ENCODE measurements at regions of chr15 and their contacts with region 1.

Region 1: DNA sequence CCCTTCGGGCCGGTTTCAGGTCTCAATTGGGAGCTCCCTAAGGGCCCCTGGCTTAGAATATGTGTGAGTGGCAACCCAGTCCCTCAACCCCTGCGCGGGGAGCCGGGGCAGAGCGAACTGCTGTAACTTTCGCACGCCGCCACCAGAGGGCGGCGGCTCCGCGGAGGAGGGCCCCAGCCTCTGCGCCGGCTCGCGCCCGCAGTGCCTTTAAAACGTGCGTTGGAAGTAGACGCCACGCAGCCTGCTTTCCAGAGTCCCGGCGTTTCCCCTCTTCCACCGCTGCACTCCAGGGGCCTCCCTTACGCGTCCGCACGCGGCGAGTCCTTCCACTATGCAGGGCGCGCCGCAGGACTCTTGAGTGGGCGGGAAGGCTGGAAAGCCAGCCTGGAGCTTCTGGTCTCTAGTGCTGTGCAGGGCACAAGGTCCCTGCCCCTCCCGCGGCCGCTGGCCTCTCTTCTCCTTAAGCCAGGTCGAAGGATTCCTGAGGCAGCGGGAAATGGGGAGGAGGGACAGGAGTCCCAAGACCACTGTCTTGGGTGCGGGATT is 23.7 kb upstream of the RNU6-1 start:
- DNase-seq: peak; percentile 87
- CTCF ChIP-seq: peak; percentile 83

Region 2: GRCh38 chr15:67850995-67851571 is 12.4 kb before region 1 on chr15:
- CTCF ChIA-PET with region 1: interaction called, 33 read pairs
- POLR2A ChIA-PET with region 1: no interaction called
- DNase-seq: no peak
- CTCF ChIP-seq: no peak

Region 3: DNA sequence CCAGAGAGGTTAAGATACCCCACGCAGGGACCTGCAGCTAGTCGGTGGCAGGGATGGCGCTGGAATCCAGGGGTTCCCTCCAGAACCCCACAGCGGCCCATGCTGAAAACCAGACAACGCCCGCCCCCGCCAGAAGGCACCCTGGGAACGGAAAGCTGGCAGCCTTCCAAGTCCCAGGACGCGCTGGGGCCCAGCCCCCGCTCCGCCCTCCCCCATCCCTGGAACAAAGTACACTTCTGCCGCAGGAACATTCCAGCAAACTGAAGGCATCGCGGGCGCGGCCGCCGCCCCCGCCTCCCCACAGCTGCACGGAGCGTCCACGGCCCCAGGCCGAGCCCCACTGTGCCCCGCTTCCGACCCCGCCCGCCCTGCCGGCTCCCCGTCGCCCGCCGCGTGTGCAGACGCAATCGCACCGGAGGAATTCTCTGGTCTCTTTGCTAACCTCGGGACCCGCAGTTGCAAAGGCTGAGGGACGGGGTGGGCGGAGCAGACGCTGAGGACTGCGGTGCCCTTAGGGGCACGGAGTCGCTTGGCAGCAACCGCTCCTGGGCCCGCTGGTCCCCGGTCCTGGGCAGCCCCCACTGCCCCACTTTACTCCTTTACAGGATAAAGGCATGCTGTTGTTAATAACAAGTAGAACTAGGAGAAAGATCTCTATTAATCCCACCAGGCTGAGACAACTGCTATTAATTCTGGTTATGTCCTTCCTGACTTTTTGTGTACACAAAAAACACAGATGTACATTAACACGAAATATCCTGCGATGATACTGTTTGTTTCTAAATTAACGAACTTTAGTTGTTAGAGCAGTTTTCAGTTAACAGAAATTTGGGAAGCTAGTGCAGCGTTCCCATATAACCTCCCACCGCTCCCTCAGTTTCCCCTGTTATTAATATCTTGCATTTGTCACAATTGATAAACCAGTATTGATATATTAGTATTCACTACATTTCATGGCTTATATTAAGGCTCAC is 21.3 kb after region 1 on chr15:
- CTCF ChIA-PET with region 1: interaction called, 13 read pairs
- POLR2A ChIA-PET with region 1: no interaction called
- DNase-seq: peak; percentile 57
- CTCF ChIP-seq: no peak

Region 4: DNA sequence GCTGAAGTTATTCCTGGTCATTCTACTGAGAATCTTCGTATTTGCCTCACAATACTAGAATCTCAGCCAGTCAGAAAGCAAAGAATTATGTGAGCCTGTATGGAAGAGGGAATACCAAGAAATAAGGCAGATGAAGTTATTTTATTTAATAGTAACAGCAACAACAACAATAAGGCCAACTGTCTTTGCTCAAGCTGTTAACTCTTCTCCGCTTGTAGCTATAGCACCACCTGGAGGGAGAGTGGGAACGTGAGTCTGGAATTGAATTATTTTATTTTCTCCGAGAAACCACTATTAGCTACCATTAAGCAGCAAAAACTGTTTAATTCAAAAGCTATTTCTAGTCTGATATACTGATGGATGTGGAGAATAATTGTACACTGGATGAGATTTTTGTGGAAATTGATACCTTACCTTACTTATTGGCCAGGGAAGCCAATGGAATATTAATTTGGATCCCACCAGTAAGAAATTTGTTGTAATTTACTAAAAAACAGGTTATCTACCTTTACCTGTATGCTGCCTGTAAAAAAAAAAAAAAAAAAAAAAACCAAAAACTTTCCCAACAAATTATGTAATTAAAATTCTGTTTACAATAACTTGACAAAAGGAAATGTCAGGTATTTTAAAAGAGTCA is 291.5 kb after region 1 on chr15:
- CTCF ChIA-PET with region 1: interaction called, 14 read pairs
- POLR2A ChIA-PET with region 1: no interaction called
- DNase-seq: peak; percentile 21
- CTCF ChIP-seq: peak; percentile 59